Keratinocyte (primary cell): ENCODE measurements at regions of chr4 and their contacts with region 1.

Region 1: GRCh38 chr4:162742406-162742805 is 424.3 kb downstream of the NAF1 start:
- DNase-seq: no peak
- H3K4me3 ChIP-seq: no peak overlapping the region
- H3K27ac ChIP-seq: no peak overlapping the region
- H3K4me1 ChIP-seq: no peaks in the 10 kb centered on the region
- H3K27me3 ChIP-seq: no peaks in the 10 kb centered on the region
- CTCF ChIP-seq: no peak

Region 2: GRCh38 chr4:162707962-162708361 is 34.4 kb before region 1 on chr4:
- dilution Hi-C with region 1: loop called (anchors 5 kb)
- DNase-seq: no peak
- H3K4me3 ChIP-seq: no peak overlapping the region
- H3K27ac ChIP-seq: no peak overlapping the region
- H3K4me1 ChIP-seq: no peaks in the 10 kb centered on the region
- H3K27me3 ChIP-seq: no peaks in the 10 kb centered on the region
- CTCF ChIP-seq: no peak

Region 3: DNA sequence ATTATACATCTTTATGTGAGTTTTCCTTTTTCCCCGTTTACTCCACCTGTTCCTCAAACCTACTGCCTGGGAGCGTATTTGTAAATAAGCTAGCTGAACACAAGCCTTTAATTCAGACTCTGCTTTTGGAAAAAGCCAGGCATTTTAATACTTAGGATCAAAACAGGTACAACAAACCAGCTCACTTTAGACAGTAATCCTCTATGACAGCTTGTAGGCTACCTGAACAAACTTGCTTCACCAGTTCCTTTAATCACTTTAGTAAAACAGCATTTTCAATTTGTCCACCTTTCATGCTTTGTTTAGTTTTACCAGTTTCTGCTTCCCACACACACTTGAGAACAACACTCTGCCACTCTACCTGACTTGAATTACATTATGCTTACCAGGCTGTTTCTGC is 131.6 kb after region 1 on chr4:
- dilution Hi-C with region 1: no loop called
- DNase-seq: no peak
- H3K4me3 ChIP-seq: no peak overlapping the region
- H3K27ac ChIP-seq: no peak overlapping the region
- H3K4me1 ChIP-seq: no peaks in the 10 kb centered on the region
- H3K27me3 ChIP-seq: no peaks in the 10 kb centered on the region
- CTCF ChIP-seq: no peak